ENCODE measurements at regions of chr2 and their contacts with region 1.

Region 1: DNA sequence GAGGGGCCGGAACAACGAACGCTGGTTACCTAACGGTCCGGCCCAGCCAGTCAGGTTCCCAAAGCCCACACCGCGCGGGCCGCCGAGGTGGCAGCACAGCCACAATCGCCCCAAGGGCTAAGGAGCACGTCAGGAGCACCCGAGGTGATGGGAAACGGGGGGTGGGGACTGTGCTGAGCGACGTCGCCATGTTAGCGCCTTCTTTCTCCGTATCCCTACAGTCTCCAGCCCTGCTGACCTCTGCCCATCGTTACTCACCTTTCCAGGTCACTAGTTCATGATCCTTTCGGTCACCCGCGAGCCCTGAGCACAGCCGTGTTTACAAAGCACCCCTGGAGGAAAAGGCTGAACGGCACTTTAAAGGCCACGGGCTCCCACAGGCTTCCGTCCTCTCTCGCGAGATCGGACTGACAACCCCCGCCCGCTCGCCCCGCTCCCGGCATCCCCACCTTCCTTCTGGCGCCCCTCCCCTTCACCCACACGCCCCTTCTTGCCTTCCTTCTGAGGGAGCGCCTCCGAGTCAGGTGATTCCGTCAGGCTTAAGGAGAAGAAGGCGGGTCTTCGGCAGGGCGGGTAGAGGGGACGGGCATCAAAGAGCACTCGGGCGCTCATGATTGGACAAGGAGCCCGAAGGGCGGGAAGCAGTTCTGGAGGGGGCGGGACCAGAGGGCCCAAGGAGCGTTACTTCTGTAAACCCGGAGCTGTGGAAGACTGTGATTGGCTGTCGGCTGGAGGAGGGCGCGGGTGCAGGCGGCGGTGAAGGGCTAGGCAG is at the start of gene ATF2:
- DNase-seq: peak; percentile 87 to 100 (median 98)
- ATAC-seq: peak; percentile 95
- H3K4me3 ChIP-seq: peak within 1 kb of the TSS; percentile 91
- H3K4me3 Mint-ChIP-seq: peak within 1 kb of the TSS; percentile 93 to 100 (median 98)
- H3K27ac ChIP-seq: peak within 1 kb of the TSS; percentile 91
- H3K27ac Mint-ChIP-seq: peak within 1 kb of the TSS; percentile 94 to 100 (median 99)
- H3K4me1 ChIP-seq: peaks cover 13 to 20% of the 10 kb centered on the region in 2 donors
- H3K4me1 Mint-ChIP-seq: peaks cover 21 to 75% (median 55%) of the 10 kb centered on the region in 7 donors
- H3K27me3 ChIP-seq: no peaks in the 10 kb centered on the region
- H3K27me3 Mint-ChIP-seq: no peaks in the 10 kb centered on the region
- total RNA-seq, gene ATF2: 40.5 to 67.2 (median 58.7) TPM

Region 2: DNA sequence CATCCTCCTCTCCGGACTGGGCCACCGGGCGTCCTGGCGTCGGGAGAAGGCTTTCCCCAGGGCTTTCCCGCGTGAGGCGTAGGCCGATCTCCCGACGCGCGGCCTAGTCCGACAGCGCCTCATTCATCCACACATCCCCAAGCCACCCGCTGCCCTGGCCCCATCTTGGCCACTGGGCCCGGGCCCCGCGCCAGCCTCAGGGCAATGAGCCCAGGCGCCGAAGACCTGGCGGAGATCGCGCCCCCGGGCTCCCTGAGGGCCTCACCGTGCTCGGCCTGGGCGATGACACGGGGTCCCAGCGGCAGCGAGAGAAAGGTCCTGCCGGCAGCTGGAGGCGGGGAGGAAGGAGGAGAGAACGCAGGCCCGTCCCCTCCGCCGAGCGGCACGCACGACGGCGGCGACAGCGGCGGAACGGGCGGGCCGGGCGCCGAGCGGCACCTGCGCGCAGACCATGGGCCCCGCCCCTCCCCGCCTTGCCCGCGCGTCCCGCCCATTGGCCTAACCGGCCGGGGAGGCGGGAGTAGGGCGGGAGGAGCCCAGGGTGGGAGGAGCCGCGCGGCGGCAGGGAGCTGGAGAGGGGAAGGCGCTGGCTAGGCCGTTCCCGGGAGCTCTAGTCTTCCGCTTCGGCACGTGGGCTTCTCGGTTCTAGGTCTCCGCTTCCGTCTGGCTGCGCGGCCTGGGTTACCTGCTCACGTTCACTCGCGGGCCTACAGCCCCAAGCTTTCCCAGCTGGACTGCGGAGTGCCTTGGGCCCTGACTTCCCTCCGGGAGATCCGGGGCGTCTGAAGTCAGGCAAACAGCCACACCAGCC is 919.6 kb before region 1 on chr2 and contains the start of gene OLA1:
- CTCF ChIA-PET with region 1: no interaction called
- POLR2A ChIA-PET with region 1: no interaction called
- intact Hi-C with region 1: loop called in 1 of 2 experiments (anchors 1 kb)
- DNase-seq: peak; percentile 91 to 99 (median 95)
- ATAC-seq: peak; percentile 99
- H3K4me3 ChIP-seq: peak within 1 kb of the TSS; percentile 90
- H3K4me3 Mint-ChIP-seq: peak within 1 kb of the TSS; percentile 71 to 88 (median 86)
- H3K27ac ChIP-seq: peak within 1 kb of the TSS; percentile 82
- H3K27ac Mint-ChIP-seq: peak within 1 kb of the TSS; percentile 67 to 91 (median 79)
- H3K4me1 ChIP-seq: peaks cover 6 to 12% of the 10 kb centered on the region in 2 donors
- H3K4me1 Mint-ChIP-seq: peaks cover 18 to 32% (median 25%) of the 10 kb centered on the region in 7 donors
- H3K27me3 ChIP-seq: no peaks in the 10 kb centered on the region
- H3K27me3 Mint-ChIP-seq: peaks cover 0 to 5% (median 0%) of the 10 kb centered on the region in 5 donors
- total RNA-seq, gene OLA1: 34.4 to 84.7 (median 40.3) TPM

Region 3: DNA sequence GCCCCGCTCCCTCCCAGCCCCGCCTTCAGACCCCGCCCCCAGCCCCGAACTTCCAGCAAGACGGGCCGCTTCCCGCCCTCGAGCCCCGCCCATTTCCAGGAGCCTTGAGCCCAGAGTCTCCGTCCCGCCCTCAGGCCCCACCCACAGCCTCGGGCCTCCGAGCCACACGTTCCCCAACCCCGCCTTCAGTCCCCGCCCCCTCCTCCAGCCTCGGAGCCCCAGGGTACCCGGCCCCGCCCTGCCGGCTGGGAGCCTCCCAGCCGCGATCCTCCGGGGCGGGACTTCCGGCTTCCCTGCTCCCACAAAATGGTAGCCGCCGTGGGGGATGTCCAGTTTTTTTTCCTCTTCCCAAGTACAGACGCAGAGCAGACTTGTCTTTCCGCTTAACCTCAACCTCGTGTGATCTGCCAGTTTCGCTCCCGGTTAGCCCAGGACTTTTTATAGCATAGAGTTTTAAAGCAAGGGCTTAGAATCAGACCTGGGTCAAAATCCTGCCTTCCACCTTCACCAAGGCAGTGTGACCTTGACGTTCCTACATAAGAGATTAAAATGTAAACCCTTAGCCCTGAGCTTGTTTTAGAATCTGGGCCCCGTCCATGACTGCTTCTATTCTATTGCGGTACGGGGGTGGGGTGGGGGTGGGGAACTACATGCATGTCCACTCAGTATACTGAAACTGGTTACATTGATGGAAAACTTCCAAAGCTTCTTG is 680.7 kb before region 1 on chr2:
- CTCF ChIA-PET with region 1: no interaction called
- POLR2A ChIA-PET with region 1: no interaction called
- intact Hi-C with region 1: loop called in 1 of 2 experiments (anchors 1 kb)
- DNase-seq: peak; percentile 66 to 93 (median 78)
- ATAC-seq: peak; percentile 89
- H3K4me3 ChIP-seq: peak overlapping the region; percentile 90
- H3K4me3 Mint-ChIP-seq: peak overlapping the region; percentile 92 to 100 (median 98)
- H3K27ac ChIP-seq: peak overlapping the region; percentile 87
- H3K27ac Mint-ChIP-seq: peak overlapping the region; percentile 88 to 100 (median 96)
- H3K4me1 ChIP-seq: peaks cover 31 to 38% of the 10 kb centered on the region in 2 donors
- H3K4me1 Mint-ChIP-seq: peaks cover 37 to 83% (median 77%) of the 10 kb centered on the region in 7 donors
- H3K27me3 ChIP-seq: no peaks in the 10 kb centered on the region
- H3K27me3 Mint-ChIP-seq: no peaks in the 10 kb centered on the region

Region 4: GRCh38 chr2:174634130-174635014 is 533.6 kb before region 1 on chr2:
- CTCF ChIA-PET with region 1: no interaction called
- POLR2A ChIA-PET with region 1: no interaction called
- intact Hi-C with region 1: loop called in 1 of 2 experiments (anchors 2 kb)
- DNase-seq: peak in 8 of 9 donors; percentile 42 to 66 (median 54)
- ATAC-seq: peak; percentile 83
- H3K4me3 ChIP-seq: peak overlapping the region; percentile 78
- H3K4me3 Mint-ChIP-seq: peak overlapping the region; percentile 90 to 100 (median 93)
- H3K27ac ChIP-seq: peak overlapping the region; percentile 82
- H3K27ac Mint-ChIP-seq: peak overlapping the region; percentile 94 to 99 (median 96)
- H3K4me1 ChIP-seq: peaks cover 44% of the 10 kb centered on the region in 2 donors
- H3K4me1 Mint-ChIP-seq: peaks cover 46 to 77% (median 72%) of the 10 kb centered on the region in 7 donors
- H3K27me3 ChIP-seq: no peaks in the 10 kb centered on the region
- H3K27me3 Mint-ChIP-seq: no peaks in the 10 kb centered on the region

Region 5: GRCh38 chr2:174729797-174730697 is 437.9 kb before region 1 on chr2:
- CTCF ChIA-PET with region 1: no interaction called
- POLR2A ChIA-PET with region 1: no interaction called
- intact Hi-C with region 1: no loop called
- DNase-seq: peak; percentile 21 to 53 (median 37)
- ATAC-seq: peak; percentile 76
- H3K4me3 ChIP-seq: peak overlapping the region; percentile 75
- H3K4me3 Mint-ChIP-seq: peak overlapping the region; percentile 84 to 96 (median 89)
- H3K27ac ChIP-seq: no peak overlapping the region
- H3K27ac Mint-ChIP-seq: peak overlapping the region in 5 of 9 donors; percentile 35 to 84 (median 57)
- H3K4me1 ChIP-seq: peaks cover 3 to 4% of the 10 kb centered on the region in 2 donors
- H3K4me1 Mint-ChIP-seq: peaks cover 6 to 28% (median 20%) of the 10 kb centered on the region in 7 donors
- H3K27me3 ChIP-seq: no peaks in the 10 kb centered on the region
- H3K27me3 Mint-ChIP-seq: peaks cover 0 to 71% (median 12%) of the 10 kb centered on the region in 5 donors

Region 6: GRCh38 chr2:174778085-174778981 is 389.6 kb before region 1 on chr2:
- CTCF ChIA-PET with region 1: no interaction called
- POLR2A ChIA-PET with region 1: no interaction called
- intact Hi-C with region 1: loop called (anchors 1 to 5 kb)
- DNase-seq: peak; percentile 51 to 93 (median 91)
- ATAC-seq: peak; percentile 93
- H3K4me3 ChIP-seq: peak overlapping the region; percentile 3
- H3K4me3 Mint-ChIP-seq: peak overlapping the region; percentile 53 to 84 (median 72)
- H3K27ac ChIP-seq: peak overlapping the region; percentile 61
- H3K27ac Mint-ChIP-seq: peak overlapping the region; percentile 55 to 97 (median 95)
- H3K4me1 ChIP-seq: peaks cover 28 to 39% of the 10 kb centered on the region in 2 donors
- H3K4me1 Mint-ChIP-seq: peaks cover 34 to 60% (median 46%) of the 10 kb centered on the region in 7 donors
- H3K27me3 ChIP-seq: no peaks in the 10 kb centered on the region
- H3K27me3 Mint-ChIP-seq: no peaks in the 10 kb centered on the region

Region 7: GRCh38 chr2:175181104-175181876 is 13.3 kb after region 1 on chr2 and contains the start of gene ATP5MC3:
- CTCF ChIA-PET with region 1: interaction called, 3 read pairs
- POLR2A ChIA-PET with region 1: interaction called, 20 read pairs
- intact Hi-C with region 1: loop called (anchors 1 kb)
- DNase-seq: peak; percentile 83 to 92 (median 89)
- ATAC-seq: peak; percentile 93
- H3K4me3 ChIP-seq: peak within 1 kb of the TSS; percentile 84
- H3K4me3 Mint-ChIP-seq: peak within 1 kb of the TSS; percentile 77 to 96 (median 88)
- H3K27ac ChIP-seq: peak within 1 kb of the TSS; percentile 89
- H3K27ac Mint-ChIP-seq: peak within 1 kb of the TSS; percentile 86 to 99 (median 93)
- H3K4me1 ChIP-seq: peaks cover 6 to 13% of the 10 kb centered on the region in 2 donors
- H3K4me1 Mint-ChIP-seq: peaks cover 14 to 39% (median 32%) of the 10 kb centered on the region in 7 donors
- H3K27me3 ChIP-seq: no peaks in the 10 kb centered on the region
- H3K27me3 Mint-ChIP-seq: no peaks in the 10 kb centered on the region
- total RNA-seq, gene ATP5MC3: 70.3 to 220 (median 77.6) TPM

Measured in naive thymus-derived CD4-positive, alpha-beta T cell (primary cell).